ENCODE measurements at regions of chr7 and their contacts with region 1.

Region 1: GRCh38 chr7:40493609-40494051 is 358.8 kb downstream of the SUGCT start:
- DNase-seq: no peak
- ATAC-seq: no peak
- H3K4me3 ChIP-seq: no peak overlapping the region
- H3K27ac ChIP-seq: no peak overlapping the region
- H3K4me1 ChIP-seq: no peaks in the 10 kb centered on the region
- H3K27me3 ChIP-seq: no peaks in the 10 kb centered on the region
- CTCF ChIP-seq: no peak

Region 2: DNA sequence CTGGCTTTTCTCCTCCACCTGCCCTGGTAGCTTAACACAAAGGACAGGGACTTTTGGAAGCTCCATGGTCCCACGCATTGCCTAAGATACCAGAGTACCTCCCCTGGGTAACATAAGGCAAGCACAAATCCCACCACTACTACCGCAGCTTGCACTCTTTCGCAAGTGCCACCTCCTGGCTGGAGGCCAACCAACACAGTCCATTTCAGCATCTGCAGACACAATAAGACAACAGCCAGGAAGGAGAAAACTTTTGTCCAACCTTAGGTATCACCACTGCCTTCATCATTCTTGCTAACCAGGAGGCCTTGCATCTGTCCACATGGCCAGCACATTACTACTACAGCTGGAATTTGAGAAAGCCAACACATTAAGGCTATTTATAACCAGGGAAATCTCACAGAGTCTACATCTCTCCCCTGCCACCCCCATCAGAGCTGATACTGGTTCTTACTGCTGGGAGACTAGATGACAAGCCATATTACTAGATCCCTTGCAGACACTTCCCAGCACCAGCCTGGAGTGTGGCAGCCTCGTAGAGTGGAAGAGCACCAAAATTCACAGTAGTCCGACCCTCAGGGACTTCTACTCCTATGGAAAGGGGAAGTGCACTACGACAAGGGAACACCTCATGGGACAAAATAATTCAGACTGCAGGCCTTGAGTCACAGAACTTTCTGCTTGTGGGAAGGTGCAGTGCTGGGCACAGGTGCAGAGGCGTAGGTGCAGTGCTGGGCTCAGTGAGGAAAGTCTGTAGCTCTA is 583.3 kb before region 1 on chr7:
- CTCF ChIA-PET with region 1: no interaction called
- POLR2A ChIA-PET with region 1: no interaction called
- in situ Hi-C with region 1: no loop called
- intact Hi-C with region 1: no loop called
- DNase-seq: no peak
- ATAC-seq: no peak; the same call in 1 of the 2 replicates
- H3K4me3 ChIP-seq: no peak overlapping the region
- H3K27ac ChIP-seq: no peak overlapping the region
- H3K4me1 ChIP-seq: no peaks in the 10 kb centered on the region
- H3K27me3 ChIP-seq: no peaks in the 10 kb centered on the region; the same call in 1 of the 2 replicates
- CTCF ChIP-seq: no peak

Region 3: DNA sequence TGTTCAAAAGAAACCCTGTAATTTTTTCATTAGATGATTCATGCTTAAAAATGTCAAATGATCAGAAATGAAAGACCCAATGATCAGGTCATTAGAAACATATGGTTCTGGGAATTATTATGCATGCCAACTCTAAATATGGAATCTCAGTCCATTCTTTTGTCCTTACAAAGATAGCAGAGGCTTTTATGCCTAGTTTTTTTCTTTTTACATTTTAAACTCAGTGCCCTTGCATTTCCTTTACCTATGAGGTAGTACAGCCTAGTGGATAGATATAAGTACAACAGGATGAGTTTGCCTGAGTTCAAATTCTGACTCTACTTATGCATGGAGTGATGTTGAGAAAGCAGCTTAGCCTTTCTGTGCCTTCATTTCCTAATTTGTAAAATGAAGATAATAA is 34.1 kb after region 1 on chr7:
- CTCF ChIA-PET with region 1: no interaction called
- POLR2A ChIA-PET with region 1: no interaction called
- in situ Hi-C with region 1: no loop called
- intact Hi-C with region 1: loop called (anchors 1 kb)
- DNase-seq: no peak
- ATAC-seq: no peak
- H3K4me3 ChIP-seq: no peak overlapping the region
- H3K27ac ChIP-seq: no peak overlapping the region
- H3K4me1 ChIP-seq: no peaks in the 10 kb centered on the region
- H3K27me3 ChIP-seq: no peaks in the 10 kb centered on the region
- CTCF ChIP-seq: no peak